MCF 10A (cell line): ENCODE measurements at regions of chr12 and their contacts with region 1.

Region 1: DNA sequence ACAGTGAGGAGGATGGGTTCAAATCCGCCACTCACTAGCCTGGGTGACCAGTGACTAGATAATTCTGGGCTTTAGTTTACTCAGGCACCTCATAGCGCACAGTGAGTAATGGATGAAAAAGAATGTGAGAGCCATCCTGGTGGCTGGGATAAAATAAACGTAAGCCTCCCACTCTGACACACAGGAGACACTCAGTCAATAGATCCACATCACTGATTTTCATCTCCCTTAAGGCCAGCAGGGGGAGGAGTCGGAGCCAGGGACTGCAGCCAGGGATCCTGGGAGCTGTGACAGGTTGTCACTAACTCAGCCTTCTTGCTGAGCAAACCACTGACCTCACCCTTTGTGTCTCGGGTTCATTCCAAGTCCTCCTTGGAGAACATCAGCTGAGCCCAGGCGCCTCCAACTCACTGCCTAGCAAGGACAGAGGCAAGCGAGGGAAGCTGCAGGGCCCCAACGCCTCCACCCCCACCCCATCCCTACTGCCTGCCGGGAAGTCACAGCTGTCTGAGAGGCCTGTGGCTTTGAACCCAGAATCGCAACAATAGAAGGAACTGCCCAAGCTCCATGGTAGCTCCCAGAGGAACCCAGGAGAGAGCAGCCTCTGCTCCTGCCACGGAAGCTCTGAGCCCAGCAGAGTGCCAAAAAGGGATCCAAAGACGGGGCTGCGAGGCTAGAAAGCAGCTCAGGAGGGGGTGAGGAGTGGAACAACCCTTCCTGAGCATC is 30.7 kb downstream of the PXN start:
- DNase-seq: peak; percentile 92
- H3K4me3 Mint-ChIP-seq: peak overlapping the region; percentile 27
- H3K27ac Mint-ChIP-seq: peak overlapping the region; percentile 79
- H3K4me1 Mint-ChIP-seq: peaks cover 74% of the 10 kb centered on the region
- H3K27me3 Mint-ChIP-seq: no peaks in the 10 kb centered on the region
- CTCF ChIP-seq: peak; percentile 35

Region 2: GRCh38 chr12:120249875-120250795 is 15.3 kb after region 1 on chr12:
- CTCF ChIA-PET with region 1: interaction called, 336 read pairs
- POLR2A ChIA-PET with region 1: interaction called, 549 read pairs
- intact Hi-C with region 1: loop called (anchors 1 kb)
- DNase-seq: no peak
- H3K4me3 Mint-ChIP-seq: no peak overlapping the region
- H3K27ac Mint-ChIP-seq: peak overlapping the region; percentile 81
- H3K4me1 Mint-ChIP-seq: peaks cover 62% of the 10 kb centered on the region
- H3K27me3 Mint-ChIP-seq: no peaks in the 10 kb centered on the region
- CTCF ChIP-seq: no peak

Region 3: GRCh38 chr12:120257041-120257821 is 22.4 kb after region 1 on chr12:
- CTCF ChIA-PET with region 1: interaction called, 454 read pairs
- POLR2A ChIA-PET with region 1: interaction called, 549 read pairs
- intact Hi-C with region 1: loop called (anchors 1 kb)
- DNase-seq: peak; percentile 93
- H3K4me3 Mint-ChIP-seq: peak overlapping the region; percentile 30
- H3K27ac Mint-ChIP-seq: peak overlapping the region; percentile 75
- H3K4me1 Mint-ChIP-seq: peaks cover 62% of the 10 kb centered on the region
- H3K27me3 Mint-ChIP-seq: no peaks in the 10 kb centered on the region
- CTCF ChIP-seq: no peak